H1 (cell line): ENCODE measurements at regions of chr6 and their contacts with region 1.

Region 1: DNA sequence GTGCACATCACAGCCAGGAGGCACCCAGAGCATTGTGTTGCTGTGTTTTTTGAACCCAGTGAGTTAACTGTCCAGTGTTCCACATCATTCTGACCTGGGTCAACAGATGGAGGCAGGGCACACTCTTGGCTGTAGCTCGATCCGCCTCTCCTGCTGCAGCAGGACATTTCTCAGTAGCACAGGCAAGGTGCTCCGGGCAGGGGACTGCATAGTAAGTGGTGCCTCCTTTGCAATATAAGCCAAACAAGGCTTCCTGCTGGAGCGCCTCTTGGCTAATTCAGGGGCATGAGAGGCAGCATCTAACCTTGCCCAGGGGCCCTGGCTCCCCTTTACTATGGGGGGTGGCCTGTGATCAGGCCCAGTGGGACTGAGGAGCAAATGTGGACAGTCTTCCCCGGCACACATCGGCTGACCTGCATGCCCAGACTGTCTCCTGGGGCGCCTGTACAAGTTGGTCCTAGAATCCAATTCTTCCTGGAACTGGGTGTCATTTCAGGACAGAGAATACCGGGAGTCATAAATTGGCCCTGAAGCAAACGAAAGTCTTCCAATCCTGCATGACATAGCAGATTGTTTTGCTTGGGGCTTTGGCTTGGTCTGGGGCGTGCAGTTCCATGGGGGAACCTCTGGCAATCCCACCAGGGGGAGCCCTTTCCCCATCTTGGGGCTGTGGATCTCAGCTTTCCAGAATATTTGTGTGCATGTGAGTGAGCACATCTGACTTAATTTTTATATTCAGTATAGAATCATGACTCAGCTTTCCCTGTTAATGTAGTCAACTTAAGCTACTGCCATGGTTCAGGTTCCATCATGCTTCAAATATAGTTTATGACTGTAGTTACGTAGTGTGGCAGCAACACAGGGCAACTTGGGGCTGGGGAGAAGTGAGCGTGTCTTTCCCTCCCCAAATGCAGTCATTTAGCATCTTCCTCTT is 56.0 kb upstream of the DDR1 start:
- DNase-seq: peak in 1 of 2 experiments; percentile 93
- H3K4me3 ChIP-seq: no peak overlapping the region
- H3K27ac ChIP-seq: no peak overlapping the region
- H3K4me1 ChIP-seq: peaks cover 0 to 11% (median 3%) of the 10 kb centered on the region in 4 experiments; a peak in 4 of 7 replicates
- H3K27me3 ChIP-seq: no peaks in the 10 kb centered on the region
- CTCF ChIP-seq: peak; percentile 92 to 95 (median 94)
- EP300 ChIP-seq: no peak
- POLR2A ChIP-seq: peak in 1 of 2 experiments; percentile 34; a peak in 1 of 3 replicates
- RAD21 ChIP-seq: peak; percentile 97

Region 2: GRCh38 chr6:30742316-30743098 is 85.8 kb before region 1 on chr6 and contains the start of gene FLOT1:
- CTCF ChIA-PET with region 1: interaction called, 11 read pairs
- POLR2A ChIA-PET with region 1: no interaction called
- DNase-seq: peak; percentile 87 to 97
- H3K4me3 ChIP-seq: peak within 1 kb of the TSS; percentile 76 to 95 (median 88)
- H3K27ac ChIP-seq: peak within 1 kb of the TSS; percentile 54; the same call in 1 of the 2 replicates
- H3K4me1 ChIP-seq: peaks cover 3 to 18% (median 7%) of the 10 kb centered on the region in 4 experiments; a peak in 6 of 7 replicates
- H3K27me3 ChIP-seq: no peaks in the 10 kb centered on the region; a peak in 1 of 7 replicates
- CTCF ChIP-seq: no peak
- EP300 ChIP-seq: no peak
- POLR2A ChIP-seq: peak; percentile 24 to 47
- RAD21 ChIP-seq: peak; percentile 2 to 4; a peak in 2 of 4 replicates
- total RNA-seq, gene FLOT1: 85.4 and 87.5 TPM in 2 replicates

Region 3: DNA sequence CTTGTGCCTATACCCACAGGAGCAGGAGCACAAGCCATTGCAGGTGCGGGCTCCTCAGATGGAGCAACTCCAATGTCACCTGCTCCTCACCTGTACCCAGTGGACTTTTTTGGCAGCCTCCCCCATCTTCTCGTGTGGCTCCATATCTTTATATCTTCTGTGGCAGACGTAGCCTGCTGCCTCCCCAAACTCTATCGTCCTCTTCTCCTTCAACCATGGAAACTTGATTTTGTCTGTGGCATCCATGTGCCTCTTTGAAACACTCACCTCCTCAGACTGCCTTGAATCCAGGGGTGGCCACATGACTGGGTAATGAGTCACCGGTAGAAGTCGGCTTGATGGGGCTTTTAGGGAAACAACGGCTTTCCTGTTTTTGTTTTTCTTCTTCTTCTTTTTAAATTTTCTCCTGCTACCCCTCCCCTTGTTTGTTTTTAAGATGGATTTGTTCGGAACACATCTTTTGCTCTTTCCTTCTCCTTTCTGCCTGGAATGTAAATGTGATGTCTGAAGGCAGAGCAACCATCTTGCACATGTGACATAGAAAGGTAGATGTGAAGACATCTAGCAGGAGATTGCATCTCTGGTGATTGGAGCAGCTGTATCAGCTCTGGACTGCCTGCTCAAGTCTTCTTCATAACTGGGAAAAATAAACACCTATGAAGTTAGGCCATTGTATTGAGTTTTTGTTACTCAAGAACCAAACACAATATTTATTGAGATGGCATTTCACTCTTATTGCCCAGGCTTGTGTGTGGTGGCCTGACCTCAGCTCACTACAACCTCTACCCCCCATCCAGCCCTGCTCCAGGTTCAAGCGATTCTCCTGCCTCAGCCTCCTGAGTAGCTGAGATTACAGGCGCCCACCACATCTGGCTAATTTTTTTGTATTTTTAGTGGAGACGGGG is 13.9 kb before region 1 on chr6:
- CTCF ChIA-PET with region 1: interaction called, 220 read pairs
- POLR2A ChIA-PET with region 1: interaction called, 7 read pairs
- DNase-seq: no peak
- H3K4me3 ChIP-seq: no peak overlapping the region
- H3K27ac ChIP-seq: no peak overlapping the region
- H3K4me1 ChIP-seq: peaks cover 3 to 8% (median 5%) of the 10 kb centered on the region in 4 experiments; a peak in 6 of 7 replicates
- H3K27me3 ChIP-seq: no peaks in the 10 kb centered on the region
- CTCF ChIP-seq: no peak
- EP300 ChIP-seq: no peak
- POLR2A ChIP-seq: no peak
- RAD21 ChIP-seq: no peak

Region 4: GRCh38 chr6:30857549-30857948 is 29.3 kb after region 1 on chr6:
- CTCF ChIA-PET with region 1: interaction called, 11 read pairs
- POLR2A ChIA-PET with region 1: no interaction called
- DNase-seq: no peak
- H3K4me3 ChIP-seq: no peak overlapping the region
- H3K27ac ChIP-seq: no peak overlapping the region
- H3K4me1 ChIP-seq: peaks cover 0 to 3% (median 2%) of the 10 kb centered on the region in 4 experiments; a peak in 2 of 7 replicates
- H3K27me3 ChIP-seq: no peaks in the 10 kb centered on the region
- CTCF ChIP-seq: no peak
- EP300 ChIP-seq: no peak
- POLR2A ChIP-seq: no peak
- RAD21 ChIP-seq: no peak

Region 5: GRCh38 chr6:30877419-30878371 is 49.4 kb after region 1 on chr6:
- CTCF ChIA-PET with region 1: interaction called, 610 read pairs
- POLR2A ChIA-PET with region 1: interaction called, 452 read pairs
- DNase-seq: peak; percentile 70 to 89
- H3K4me3 ChIP-seq: no peak overlapping the region
- H3K27ac ChIP-seq: no peak overlapping the region
- H3K4me1 ChIP-seq: peaks cover 7 to 32% (median 21%) of the 10 kb centered on the region in 4 experiments
- H3K27me3 ChIP-seq: no peaks in the 10 kb centered on the region
- CTCF ChIP-seq: peak in 2 of 3 experiments; percentile 94 to 95; a peak in 3 of 4 replicates
- EP300 ChIP-seq: peak in 1 of 2 experiments; percentile 46; a peak in 1 of 3 replicates
- POLR2A ChIP-seq: no peak
- RAD21 ChIP-seq: peak; percentile 98 to 99

Region 6: DNA sequence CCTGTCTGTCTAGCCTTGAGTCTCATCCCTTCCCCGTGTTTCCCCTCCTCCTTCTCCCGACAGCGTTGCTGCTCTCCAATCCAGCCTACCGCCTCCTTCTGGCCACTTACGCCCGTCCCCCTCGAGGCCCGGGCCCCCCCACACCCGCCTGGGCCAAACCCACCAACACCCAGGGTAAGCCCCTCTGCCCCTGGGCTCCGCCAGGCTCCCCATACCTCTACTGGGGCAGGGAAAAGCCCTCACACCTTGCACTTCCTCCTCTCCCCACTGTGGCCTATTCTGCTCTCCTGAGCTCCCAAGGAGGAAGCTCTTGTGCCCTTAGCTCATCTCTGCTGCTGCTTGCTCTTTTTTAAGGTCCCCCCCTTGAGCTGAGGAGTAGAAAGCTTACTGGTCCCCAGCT is 67.0 kb after region 1 on chr6:
- CTCF ChIA-PET with region 1: interaction called, 610 read pairs
- POLR2A ChIA-PET with region 1: interaction called, 452 read pairs
- DNase-seq: no peak
- H3K4me3 ChIP-seq: no peak overlapping the region
- H3K27ac ChIP-seq: no peak overlapping the region
- H3K4me1 ChIP-seq: peaks cover 0 to 7% (median 1%) of the 10 kb centered on the region in 4 experiments; a peak in 3 of 7 replicates
- H3K27me3 ChIP-seq: no peaks in the 10 kb centered on the region
- CTCF ChIP-seq: no peak
- EP300 ChIP-seq: no peak
- POLR2A ChIP-seq: no peak
- RAD21 ChIP-seq: no peak

Region 7: GRCh38 chr6:30960907-30961673 is 132.8 kb after region 1 on chr6:
- CTCF ChIA-PET with region 1: no interaction called
- POLR2A ChIA-PET with region 1: no interaction called
- DNase-seq: no peak
- H3K4me3 ChIP-seq: no peak overlapping the region
- H3K27ac ChIP-seq: no peak overlapping the region
- H3K4me1 ChIP-seq: 0 out of 7 replicates have a peak, but pooled peaks cover 0 to under 1% (median 0%) of the 10 kb centered on the region in 4 experiments
- H3K27me3 ChIP-seq: peaks cover 0 to 10% (median 8%) of the 10 kb centered on the region in 4 experiments; a peak in 5 of 7 replicates
- CTCF ChIP-seq: no peak
- EP300 ChIP-seq: no peak
- POLR2A ChIP-seq: no peak
- RAD21 ChIP-seq: no peak

Region 8: DNA sequence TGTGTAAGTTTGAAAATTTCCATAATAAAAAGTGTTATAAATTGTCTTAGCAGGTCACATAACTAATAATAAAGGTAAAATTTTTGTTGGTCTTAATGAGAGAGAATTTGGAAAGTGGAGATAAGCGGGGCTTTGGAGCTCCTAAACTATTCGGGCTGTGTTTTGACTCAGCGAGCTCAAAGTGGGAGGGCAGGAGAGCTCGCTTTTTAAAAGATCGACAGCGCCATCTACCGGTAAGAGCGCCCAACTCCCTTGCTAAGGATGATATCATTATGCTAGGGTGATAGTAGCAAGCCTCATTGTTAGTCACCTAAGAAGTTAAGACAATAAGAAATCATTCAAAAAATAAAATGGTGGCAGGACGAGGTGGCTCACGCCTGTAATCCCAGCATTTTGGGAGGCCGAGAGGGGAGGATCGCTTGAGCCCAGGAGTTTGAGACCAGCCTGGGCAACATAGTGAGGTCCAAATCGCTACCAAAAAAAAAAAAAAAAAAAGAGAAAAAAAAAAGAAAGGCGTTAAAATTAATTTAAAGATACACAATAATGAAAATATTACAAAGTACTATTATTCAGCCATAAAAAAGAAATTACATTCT is 259.3 kb after region 1 on chr6:
- CTCF ChIA-PET with region 1: interaction called, 26 read pairs
- POLR2A ChIA-PET with region 1: no interaction called
- DNase-seq: peak in 1 of 2 experiments; percentile 87
- H3K4me3 ChIP-seq: no peak overlapping the region
- H3K27ac ChIP-seq: no peak overlapping the region
- H3K4me1 ChIP-seq: no peaks in the 10 kb centered on the region; a peak in 1 of 7 replicates
- H3K27me3 ChIP-seq: no peaks in the 10 kb centered on the region
- CTCF ChIP-seq: peak; percentile 47 to 70 (median 67)
- EP300 ChIP-seq: no peak
- POLR2A ChIP-seq: no peak
- RAD21 ChIP-seq: peak; percentile 81 to 83